ENCODE measurements at regions of chr12 and their contacts with region 1.

Region 1: GRCh38 chr12:111396726-111397445 is 8.8 kb upstream of the SH2B3 start:
- DNase-seq: peak; percentile 90
- ATAC-seq: peak; percentile 84 to 94

Region 2: GRCh38 chr12:111451649-111452129 is 54.8 kb after region 1 on chr12:
- intact Hi-C with region 1: loop called (anchors 1 to 2 kb)
- DNase-seq: no peak
- ATAC-seq: no peak

Region 3: GRCh38 chr12:111529424-111530368 is 132.8 kb after region 1 on chr12:
- intact Hi-C with region 1: loop called (anchors 5 kb)
- DNase-seq: no peak
- ATAC-seq: peak; percentile 41 to 65

Region 4: GRCh38 chr12:111570084-111570961 is 173.4 kb after region 1 on chr12:
- intact Hi-C with region 1: no loop called
- DNase-seq: no peak
- ATAC-seq: peak; percentile 59 to 92

Region 5: DNA sequence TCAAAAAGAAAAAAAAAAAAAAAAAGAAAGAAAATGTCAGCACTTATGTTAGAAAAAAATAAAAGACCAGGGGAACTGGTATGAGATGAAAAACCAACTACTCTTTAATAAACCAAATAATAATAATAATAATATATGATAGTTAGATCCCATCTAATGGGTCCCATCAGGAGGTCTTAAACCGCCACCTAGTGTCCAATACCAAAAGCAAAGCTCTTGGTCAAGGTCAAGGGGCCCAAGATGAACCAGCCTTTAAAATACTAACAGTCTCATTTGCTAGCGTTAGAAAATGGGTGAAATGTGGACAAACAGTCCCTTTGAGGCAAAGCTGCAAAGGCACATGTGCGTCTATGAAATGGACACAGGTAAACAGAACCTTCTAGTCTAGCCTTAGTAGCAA is 276.6 kb after region 1 on chr12:
- intact Hi-C with region 1: loop called in 1 of 2 experiments (anchors 10 kb)
- DNase-seq: no peak
- ATAC-seq: peak; percentile 36 to 55

Region 6: GRCh38 chr12:111685744-111686517 is 289.0 kb after region 1 on chr12 and contains the starts of genes ACAD10 and BRAP:
- intact Hi-C with region 1: loop called in 1 of 2 experiments (anchors 10 kb)
- DNase-seq: peak; percentile 95
- ATAC-seq: peak; percentile 98 to 99
- total RNA-seq, gene ACAD10: 17.7 to 23.7 TPM
- total RNA-seq, gene BRAP: 12.9 to 13.0 TPM